Mammary epithelial cell (primary cell): ENCODE measurements at regions of chr7 and their contacts with region 1.

Region 1: GRCh38 chr7:38153515-38153914 is 24.5 kb upstream of the STARD3NL start:
- DNase-seq: no peak
- H3K4me3 ChIP-seq: no peak overlapping the region
- H3K27ac ChIP-seq: no peak overlapping the region
- H3K4me1 ChIP-seq: no peaks in the 10 kb centered on the region
- H3K27me3 ChIP-seq: peaks cover 2% of the 10 kb centered on the region
- CTCF ChIP-seq: no peak

Region 2: GRCh38 chr7:38169847-38170246 is 16.3 kb after region 1 on chr7:
- CTCF ChIA-PET with region 1: no interaction called
- dilution Hi-C with region 1: no loop called
- in situ Hi-C with region 1: no loop called
- intact Hi-C with region 1: loop called (anchors 1 kb)
- DNase-seq: peak; percentile 60
- H3K4me3 ChIP-seq: no peak overlapping the region
- H3K27ac ChIP-seq: no peak overlapping the region
- H3K4me1 ChIP-seq: peaks cover 4% of the 10 kb centered on the region
- H3K27me3 ChIP-seq: no peaks in the 10 kb centered on the region
- CTCF ChIP-seq: no peak